Sigmoid colon (tissue), 7 donors: ENCODE measurements at regions of chr5 and their contacts with region 1.

Region 1: GRCh38 chr5:142922223-142922952 is 152.2 kb downstream of the ARHGAP26 start:
- DNase-seq: no peak
- H3K4me3 ChIP-seq: no peak overlapping the region
- H3K27ac ChIP-seq: no peak overlapping the region
- H3K4me1 ChIP-seq: peaks cover 0 to 13% (median 5%) of the 10 kb centered on the region in 4 donors
- H3K27me3 ChIP-seq: no peaks in the 10 kb centered on the region
- CTCF ChIP-seq: peak; percentile 6 to 50 (median 44)
- EP300 ChIP-seq: no peak
- POLR2A ChIP-seq: no peak

Region 2: GRCh38 chr5:142758056-142758795 is 164.2 kb before region 1 on chr5:
- intact Hi-C with region 1: no loop called
- DNase-seq: no peak
- H3K4me3 ChIP-seq: no peak overlapping the region
- H3K27ac ChIP-seq: no peak overlapping the region
- H3K4me1 ChIP-seq: peaks cover 0 to 8% (median 5%) of the 10 kb centered on the region in 4 donors
- H3K27me3 ChIP-seq: no peaks in the 10 kb centered on the region
- CTCF ChIP-seq: no peak
- EP300 ChIP-seq: no peak
- POLR2A ChIP-seq: no peak

Region 3: DNA sequence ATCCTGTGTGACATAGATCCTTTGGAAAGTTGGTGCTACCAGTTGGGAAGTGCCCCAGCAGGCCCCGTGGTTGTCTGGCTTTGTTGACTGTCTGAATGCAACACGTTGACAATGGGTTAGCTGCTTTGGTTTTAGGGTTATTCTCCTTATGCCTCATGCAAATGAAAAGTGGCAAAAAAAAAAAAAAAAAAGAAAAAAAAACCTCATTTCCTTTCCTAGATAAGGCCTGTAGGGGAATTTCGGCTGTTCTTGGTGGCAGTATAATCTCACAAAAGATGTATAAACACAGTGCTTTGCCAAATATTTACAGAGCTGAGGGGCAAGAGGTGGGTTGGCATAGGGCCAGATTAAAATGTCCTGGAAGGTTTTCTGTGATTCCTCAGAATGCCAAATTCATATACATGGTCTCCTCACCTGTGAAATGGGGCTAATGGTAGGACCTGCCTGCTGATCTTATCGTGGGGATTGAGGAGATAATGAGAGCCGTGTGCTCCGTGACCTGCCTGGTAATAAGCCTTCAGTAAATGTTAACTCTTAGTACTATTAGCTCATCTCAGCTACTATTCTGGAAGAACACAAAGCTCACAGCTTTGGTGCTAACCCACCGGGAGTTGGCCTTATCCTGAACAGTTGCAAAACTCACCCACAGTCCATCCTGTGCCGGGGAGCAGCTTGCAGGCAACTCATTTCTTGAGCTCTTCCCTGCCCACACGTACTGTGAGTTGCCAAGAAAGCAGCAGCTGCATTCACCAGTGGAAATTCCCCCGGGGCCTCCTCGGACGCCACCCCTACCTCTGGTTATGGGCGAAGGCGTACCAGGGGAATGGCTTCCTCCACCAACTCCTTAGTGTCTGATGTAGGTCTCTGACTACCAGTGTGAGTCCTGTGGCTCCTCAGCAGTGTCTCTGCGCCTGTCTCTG is 260.8 kb after region 1 on chr5:
- intact Hi-C with region 1: no loop called
- DNase-seq: no peak
- H3K4me3 ChIP-seq: no peak overlapping the region
- H3K27ac ChIP-seq: no peak overlapping the region
- H3K4me1 ChIP-seq: peaks cover 0 to 9% (median 5%) of the 10 kb centered on the region in 4 donors
- H3K27me3 ChIP-seq: no peaks in the 10 kb centered on the region
- CTCF ChIP-seq: no peak
- EP300 ChIP-seq: no peak
- POLR2A ChIP-seq: no peak

Region 4: DNA sequence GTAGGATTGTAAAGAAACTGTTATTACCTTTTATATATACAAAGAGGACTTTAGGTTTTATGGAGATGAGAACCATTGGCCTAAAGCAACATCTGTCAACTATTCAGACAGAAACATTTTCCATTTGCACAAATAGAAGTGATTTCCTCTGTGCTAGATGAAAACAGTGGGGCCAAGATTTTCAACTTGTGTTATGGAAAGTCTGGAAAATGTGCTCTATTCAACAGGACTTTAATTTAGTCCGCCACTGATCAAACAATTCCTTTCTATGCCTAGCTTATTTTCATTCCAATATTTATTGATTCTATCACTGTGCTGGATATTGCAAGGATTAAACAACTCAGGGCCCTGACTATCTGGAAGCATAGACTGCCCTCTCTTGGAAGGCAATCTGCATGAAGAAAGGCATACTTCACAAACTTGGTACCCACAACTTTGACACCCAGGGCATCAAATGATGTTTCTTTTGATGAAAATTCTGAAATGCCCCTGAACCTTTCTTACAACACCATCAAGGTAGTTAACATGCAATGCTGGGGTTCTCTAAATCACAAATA is 762.9 kb after region 1 on chr5:
- intact Hi-C with region 1: no loop called
- DNase-seq: no peak
- H3K4me3 ChIP-seq: no peak overlapping the region
- H3K27ac ChIP-seq: no peak overlapping the region
- H3K4me1 ChIP-seq: peaks cover 0 to 6% (median 0%) of the 10 kb centered on the region in 4 donors
- H3K27me3 ChIP-seq: no peaks in the 10 kb centered on the region
- CTCF ChIP-seq: no peak
- EP300 ChIP-seq: no peak
- POLR2A ChIP-seq: no peak

Region 5: GRCh38 chr5:143824851-143825720 is 902.7 kb after region 1 on chr5:
- intact Hi-C with region 1: loop called (anchors 1 kb)
- DNase-seq: peak; percentile 87
- H3K4me3 ChIP-seq: no peak overlapping the region
- H3K27ac ChIP-seq: no peak overlapping the region
- H3K4me1 ChIP-seq: peaks cover 0 to 7% (median 2%) of the 10 kb centered on the region in 4 donors
- H3K27me3 ChIP-seq: no peaks in the 10 kb centered on the region
- CTCF ChIP-seq: peak; percentile 56 to 96 (median 92)
- EP300 ChIP-seq: no peak
- POLR2A ChIP-seq: no peak

Region 6: DNA sequence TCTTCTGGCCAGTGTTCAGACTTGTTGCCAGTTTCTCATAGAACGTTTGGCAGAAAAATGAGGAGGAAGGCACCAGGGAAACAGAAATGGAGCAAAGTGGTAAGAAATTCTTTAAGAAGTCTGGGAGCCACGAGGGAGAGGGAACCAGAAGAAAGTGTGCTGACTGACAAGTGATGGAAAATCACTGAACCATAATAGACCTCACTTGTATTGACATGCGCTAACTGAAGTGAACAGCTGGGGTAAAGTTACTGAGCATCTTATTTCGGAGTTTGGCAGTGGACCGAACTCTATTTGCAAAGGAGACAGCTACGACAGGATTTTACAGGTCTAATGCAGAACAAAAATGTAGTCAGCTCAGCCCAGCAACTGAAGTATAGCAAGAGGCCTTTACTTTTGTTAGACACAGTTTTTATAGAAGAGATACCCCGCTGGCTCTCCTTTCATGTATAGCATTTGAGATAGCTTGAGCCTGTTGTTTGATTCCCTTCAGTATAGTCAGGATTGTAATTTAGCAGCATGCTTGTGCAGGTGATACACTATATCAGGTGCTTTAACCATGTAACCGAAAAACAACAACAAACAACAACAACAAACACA is 943.1 kb after region 1 on chr5:
- intact Hi-C with region 1: no loop called
- DNase-seq: no peak
- H3K4me3 ChIP-seq: no peak overlapping the region
- H3K27ac ChIP-seq: no peak overlapping the region
- H3K4me1 ChIP-seq: no peaks in the 10 kb centered on the region
- H3K27me3 ChIP-seq: no peaks in the 10 kb centered on the region
- CTCF ChIP-seq: no peak
- EP300 ChIP-seq: no peak
- POLR2A ChIP-seq: no peak